Posterior cingulate gyrus (tissue), 11 donors: ENCODE measurements at regions of chr1 and their contacts with region 1.

Region 1: DNA sequence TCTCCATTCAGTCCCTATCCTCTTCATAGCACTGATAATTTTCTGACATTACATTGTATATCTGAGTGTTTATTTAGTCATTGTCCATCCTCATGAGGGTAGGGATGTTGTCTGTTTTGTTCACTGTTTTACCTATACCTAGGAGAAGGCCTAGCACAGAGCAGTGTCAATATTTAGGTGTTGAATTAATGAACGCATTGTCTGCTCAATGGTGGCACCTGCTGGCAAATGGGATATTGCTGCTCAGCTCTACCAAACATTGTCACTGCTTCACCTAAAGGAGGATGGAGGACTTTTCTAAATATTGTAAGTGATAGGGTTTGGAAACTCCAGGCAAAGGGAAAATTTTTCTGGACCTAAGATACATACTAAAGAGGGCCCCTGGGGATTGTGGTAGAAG is 243.9 kb downstream of the RRAGC start:
- DNase-seq: no peak

Region 2: GRCh38 chr1:37875834-37876233 is 739.8 kb before region 1 on chr1:
- intact Hi-C with region 1: no loop called
- DNase-seq: no peak

Region 3: DNA sequence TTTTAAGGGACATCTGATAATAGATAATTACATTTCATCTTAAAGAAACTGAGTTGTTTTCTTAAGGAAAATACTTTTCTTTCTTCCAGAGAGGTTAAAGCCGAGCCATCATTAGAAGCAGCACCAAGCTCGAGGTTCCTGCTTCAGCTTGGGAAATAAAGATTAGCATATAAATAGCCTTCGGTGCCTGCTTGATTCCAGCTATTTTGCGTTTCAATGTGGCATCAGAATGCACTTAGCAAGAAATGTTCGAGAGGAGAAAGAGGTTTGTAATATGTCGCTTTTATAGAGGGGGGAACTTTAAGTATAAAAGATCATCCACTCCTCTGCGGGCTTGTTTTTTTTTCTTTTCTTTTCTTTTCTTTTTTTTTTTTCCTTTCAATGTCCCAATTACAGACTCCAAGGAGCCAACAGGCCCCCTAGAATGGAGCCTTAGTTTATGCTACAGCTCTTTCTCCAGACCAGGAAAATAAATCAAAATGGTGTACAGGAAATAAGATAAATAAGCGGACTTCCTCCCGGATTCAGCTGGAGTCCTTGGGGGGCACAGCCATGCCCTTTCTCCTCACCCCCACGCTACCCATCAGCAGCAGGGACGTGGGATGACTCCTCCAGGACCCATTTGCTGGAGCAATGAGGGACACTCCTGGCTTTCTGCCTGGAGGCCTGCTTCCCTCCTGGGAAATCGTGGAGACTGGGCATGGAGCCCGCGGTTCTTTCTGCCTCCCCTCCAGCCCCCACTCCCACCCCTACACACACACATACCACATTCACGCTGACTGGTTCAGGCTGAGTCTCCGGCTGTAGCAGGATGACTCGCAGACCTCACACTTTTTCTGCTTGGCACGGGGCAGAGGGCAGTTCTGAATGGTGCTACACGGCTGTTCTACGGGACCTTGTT is 112.3 kb after region 1 on chr1:
- intact Hi-C with region 1: loop called (anchors 10 kb)
- DNase-seq: peak; percentile 18 to 88 (median 40)

Region 4: DNA sequence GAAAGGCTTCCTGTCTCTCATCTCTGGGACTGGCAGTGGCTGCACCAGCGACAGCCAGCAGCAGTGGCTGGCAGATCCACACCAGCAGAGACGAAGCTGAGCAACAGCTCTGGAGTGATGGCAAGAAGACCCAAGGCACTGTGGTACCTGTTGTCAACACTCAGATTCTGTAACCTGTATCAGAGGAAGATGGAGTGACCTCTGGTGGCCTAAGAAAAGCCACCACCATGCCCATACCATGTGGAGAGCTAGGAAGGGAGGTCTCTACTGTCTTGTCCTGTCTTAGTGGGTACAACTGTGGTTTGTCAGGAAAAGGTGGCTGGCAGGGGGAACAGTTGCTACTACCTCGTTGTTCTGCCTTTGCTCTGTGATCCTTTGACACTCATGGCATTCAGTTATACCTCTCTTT is 348.5 kb after region 1 on chr1:
- intact Hi-C with region 1: loop called (anchors 10 kb)
- DNase-seq: peak in 1 of 10 donors; percentile 23